ENCODE measurements at regions of chr1 and their contacts with region 1.

Region 1: GRCh38 chr1:116377541-116378529 is 4.8 kb downstream of the ATP1A1 start:
- DNase-seq: peak in 13 of 14 experiments; percentile 9 to 83 (median 28)
- ATAC-seq: peak; percentile 62
- H3K4me3 ChIP-seq: peak overlapping the region; percentile 51
- H3K4me3 Mint-ChIP-seq: peak overlapping the region; percentile 98
- H3K27ac ChIP-seq: peak overlapping the region; percentile 88 to 98
- H3K27ac Mint-ChIP-seq: peak overlapping the region; percentile 93
- H3K4me1 ChIP-seq: peaks cover 62% of the 10 kb centered on the region
- H3K4me1 Mint-ChIP-seq: peaks cover 86% of the 10 kb centered on the region
- H3K27me3 ChIP-seq: no peaks in the 10 kb centered on the region
- H3K27me3 Mint-ChIP-seq: no peaks in the 10 kb centered on the region
- CTCF ChIP-seq: no peak

Region 2: DNA sequence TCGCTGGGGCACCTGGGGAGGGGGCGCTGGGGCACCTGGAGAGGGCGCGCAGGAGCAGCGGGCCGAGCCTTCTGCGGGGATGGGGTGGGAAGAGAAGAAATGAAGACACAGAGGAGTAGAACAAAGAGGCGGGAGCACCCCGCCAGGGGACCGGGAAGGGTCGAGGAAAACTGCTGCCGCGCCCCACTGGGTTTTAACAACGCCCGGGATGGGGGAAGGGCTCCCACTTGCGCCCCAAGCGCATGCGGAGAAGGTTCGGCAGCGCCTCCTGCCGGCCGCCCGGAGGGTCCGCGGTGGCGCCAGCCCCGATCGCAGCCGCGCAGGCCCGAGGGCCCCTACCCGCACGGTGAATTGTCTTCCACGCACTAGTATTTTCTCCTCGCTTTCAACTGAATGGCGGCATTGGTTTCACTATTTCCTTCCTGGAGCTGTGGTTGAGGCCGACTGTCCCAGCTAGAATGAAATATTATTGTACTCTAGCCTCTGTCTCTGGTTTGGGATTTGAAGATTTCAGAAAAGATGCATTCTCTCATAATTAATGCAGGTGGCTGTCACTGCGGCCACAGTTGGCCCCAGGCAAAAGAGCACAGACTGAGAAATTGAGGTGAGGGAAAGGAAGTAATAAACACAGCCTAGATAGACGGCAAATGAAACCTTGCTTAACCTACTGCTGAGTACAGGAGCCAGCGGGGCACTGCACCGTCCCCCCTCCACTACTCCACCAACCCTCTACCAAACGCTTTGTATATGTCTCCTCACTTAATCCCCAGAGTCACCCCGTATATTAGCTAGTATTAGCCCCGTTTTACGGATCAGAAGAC is 209.3 kb before region 1 on chr1:
- CTCF ChIA-PET with region 1: no interaction called
- POLR2A ChIA-PET with region 1: no interaction called
- intact Hi-C with region 1: loop called in 1 of 2 experiments (anchors 5 kb)
- DNase-seq: peak; percentile 73 to 93 (median 84)
- ATAC-seq: peak; percentile 99
- H3K4me3 ChIP-seq: peak overlapping the region; percentile 63
- H3K4me3 Mint-ChIP-seq: peak overlapping the region; percentile 86
- H3K27ac ChIP-seq: peak overlapping the region in 1 of 2 donors; percentile 26
- H3K27ac Mint-ChIP-seq: peak overlapping the region; percentile 66
- H3K4me1 ChIP-seq: peaks cover 20% of the 10 kb centered on the region
- H3K4me1 Mint-ChIP-seq: peaks cover 21% of the 10 kb centered on the region
- H3K27me3 ChIP-seq: no peaks in the 10 kb centered on the region
- H3K27me3 Mint-ChIP-seq: no peaks in the 10 kb centered on the region
- CTCF ChIP-seq: peak; percentile 94

Region 3: DNA sequence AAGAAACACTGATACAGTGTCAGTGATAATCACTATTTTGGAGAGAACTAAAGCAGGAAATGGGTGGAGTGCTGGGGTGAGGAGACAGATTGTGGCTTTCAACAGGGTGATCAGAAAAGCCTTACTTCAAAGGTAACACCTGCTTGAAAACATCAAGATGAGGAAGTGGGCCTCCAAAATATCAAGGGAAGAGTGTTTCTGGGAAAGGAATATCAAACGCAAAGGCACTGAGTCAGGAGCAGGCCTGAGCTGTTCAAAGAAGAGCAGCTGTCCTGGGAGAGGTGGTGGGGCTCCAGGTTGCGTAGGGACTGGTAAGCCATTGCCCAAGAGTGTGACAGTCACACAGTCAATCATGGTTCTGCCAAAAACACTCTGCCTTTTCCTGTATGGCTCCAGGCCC is 51.9 kb before region 1 on chr1:
- CTCF ChIA-PET with region 1: no interaction called
- POLR2A ChIA-PET with region 1: interaction called, 35 read pairs
- intact Hi-C with region 1: loop called (anchors 2 to 5 kb)
- DNase-seq: peak; percentile 25 to 83 (median 53)
- ATAC-seq: peak; percentile 91
- H3K4me3 ChIP-seq: peak overlapping the region; percentile 22
- H3K4me3 Mint-ChIP-seq: peak overlapping the region; percentile 62
- H3K27ac ChIP-seq: peak overlapping the region; percentile 72 to 85
- H3K27ac Mint-ChIP-seq: peak overlapping the region; percentile 91
- H3K4me1 ChIP-seq: peaks cover 60% of the 10 kb centered on the region
- H3K4me1 Mint-ChIP-seq: peaks cover 98% of the 10 kb centered on the region
- H3K27me3 ChIP-seq: no peaks in the 10 kb centered on the region
- H3K27me3 Mint-ChIP-seq: no peaks in the 10 kb centered on the region
- CTCF ChIP-seq: no peak

Region 4: DNA sequence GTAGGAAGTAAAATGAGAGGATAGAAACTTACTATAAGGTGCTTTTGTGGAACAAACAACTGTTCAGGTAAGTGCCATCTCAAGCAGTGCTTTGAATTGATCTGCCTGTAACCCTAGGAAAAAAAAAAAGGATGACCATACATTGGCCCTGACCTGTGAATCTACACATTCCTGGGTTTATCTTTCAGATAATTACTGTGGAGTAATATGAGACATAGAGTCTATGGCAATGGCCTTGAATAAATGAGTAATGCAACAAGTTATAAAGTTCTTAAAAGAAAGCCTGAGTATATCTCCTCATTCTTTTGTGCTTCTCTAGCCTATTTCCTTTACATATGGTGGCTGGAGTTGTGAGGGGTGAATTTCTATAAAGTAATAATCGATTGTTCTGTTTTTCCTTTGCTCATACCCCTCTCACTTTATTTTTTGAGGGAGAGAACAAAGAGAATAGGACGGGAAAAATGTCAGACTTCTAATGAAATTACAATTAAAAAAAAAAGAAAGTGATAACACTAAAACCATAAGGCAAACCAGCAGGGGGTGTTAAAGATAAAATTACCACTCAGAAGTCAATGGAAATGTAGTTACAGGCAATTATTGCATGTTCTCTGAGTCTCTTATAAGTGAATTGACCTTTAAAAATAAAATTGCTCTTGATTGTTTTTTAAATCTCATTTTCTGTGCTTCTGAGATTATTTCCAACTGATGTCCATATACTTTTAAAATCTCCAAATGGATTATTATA is 17.2 kb before region 1 on chr1:
- CTCF ChIA-PET with region 1: no interaction called
- POLR2A ChIA-PET with region 1: interaction called, 10 read pairs
- intact Hi-C with region 1: loop called in 1 of 2 experiments (anchors 2 kb)
- DNase-seq: peak in 3 of 14 experiments; percentile 55 to 62 (median 57)
- ATAC-seq: no peak
- H3K4me3 ChIP-seq: no peak overlapping the region
- H3K4me3 Mint-ChIP-seq: no peak overlapping the region
- H3K27ac ChIP-seq: no peak overlapping the region
- H3K27ac Mint-ChIP-seq: no peak overlapping the region
- H3K4me1 ChIP-seq: no peaks in the 10 kb centered on the region
- H3K4me1 Mint-ChIP-seq: peaks cover 44% of the 10 kb centered on the region
- H3K27me3 ChIP-seq: no peaks in the 10 kb centered on the region
- H3K27me3 Mint-ChIP-seq: no peaks in the 10 kb centered on the region
- CTCF ChIP-seq: peak; percentile 38

Region 5: GRCh38 chr1:116418091-116418830 is 40.4 kb after region 1 on chr1:
- CTCF ChIA-PET with region 1: no interaction called
- POLR2A ChIA-PET with region 1: interaction called, 32 read pairs
- intact Hi-C with region 1: loop called (anchors 1 to 5 kb)
- DNase-seq: peak; percentile 79 to 93 (median 85)
- ATAC-seq: peak; percentile 96
- H3K4me3 ChIP-seq: peak overlapping the region; percentile 94
- H3K4me3 Mint-ChIP-seq: peak overlapping the region; percentile 90
- H3K27ac ChIP-seq: peak overlapping the region; percentile 72 to 78
- H3K27ac Mint-ChIP-seq: peak overlapping the region; percentile 97
- H3K4me1 ChIP-seq: peaks cover 22% of the 10 kb centered on the region
- H3K4me1 Mint-ChIP-seq: peaks cover 32% of the 10 kb centered on the region
- H3K27me3 ChIP-seq: no peaks in the 10 kb centered on the region
- H3K27me3 Mint-ChIP-seq: no peaks in the 10 kb centered on the region
- CTCF ChIP-seq: no peak

Region 6: GRCh38 chr1:116504308-116505156 is 126.7 kb after region 1 on chr1:
- CTCF ChIA-PET with region 1: no interaction called
- POLR2A ChIA-PET with region 1: no interaction called
- intact Hi-C with region 1: loop called in 1 of 2 experiments (anchors 5 kb)
- DNase-seq: peak; percentile 67 to 97 (median 81)
- ATAC-seq: peak; percentile 95
- H3K4me3 ChIP-seq: no peak overlapping the region
- H3K4me3 Mint-ChIP-seq: peak overlapping the region; percentile 23
- H3K27ac ChIP-seq: peak overlapping the region; percentile 76
- H3K27ac Mint-ChIP-seq: peak overlapping the region; percentile 89
- H3K4me1 ChIP-seq: peaks cover 64% of the 10 kb centered on the region
- H3K4me1 Mint-ChIP-seq: peaks cover 55% of the 10 kb centered on the region
- H3K27me3 ChIP-seq: no peaks in the 10 kb centered on the region
- H3K27me3 Mint-ChIP-seq: no peaks in the 10 kb centered on the region
- CTCF ChIP-seq: no peak